ENCODE measurements at regions of chr1 and their contacts with region 1.

Region 1: GRCh38 chr1:155967341-155968050 is 10.9 kb downstream of the ARHGEF2 start:
- DNase-seq: peak in 1 of 2 donors; percentile 49
- ATAC-seq: peak; percentile 42 to 43
- H3K4me3 ChIP-seq: peak overlapping the region in 3 of 4 donors; percentile 11 to 32 (median 24)
- H3K27ac ChIP-seq: peak overlapping the region; percentile 82 to 95 (median 88)
- H3K4me1 ChIP-seq: peaks cover 58 to 66% of the 10 kb centered on the region in 2 donors
- H3K27me3 ChIP-seq: no peaks in the 10 kb centered on the region
- CTCF ChIP-seq: no peak
- POLR2A ChIP-seq: no peak

Region 2: DNA sequence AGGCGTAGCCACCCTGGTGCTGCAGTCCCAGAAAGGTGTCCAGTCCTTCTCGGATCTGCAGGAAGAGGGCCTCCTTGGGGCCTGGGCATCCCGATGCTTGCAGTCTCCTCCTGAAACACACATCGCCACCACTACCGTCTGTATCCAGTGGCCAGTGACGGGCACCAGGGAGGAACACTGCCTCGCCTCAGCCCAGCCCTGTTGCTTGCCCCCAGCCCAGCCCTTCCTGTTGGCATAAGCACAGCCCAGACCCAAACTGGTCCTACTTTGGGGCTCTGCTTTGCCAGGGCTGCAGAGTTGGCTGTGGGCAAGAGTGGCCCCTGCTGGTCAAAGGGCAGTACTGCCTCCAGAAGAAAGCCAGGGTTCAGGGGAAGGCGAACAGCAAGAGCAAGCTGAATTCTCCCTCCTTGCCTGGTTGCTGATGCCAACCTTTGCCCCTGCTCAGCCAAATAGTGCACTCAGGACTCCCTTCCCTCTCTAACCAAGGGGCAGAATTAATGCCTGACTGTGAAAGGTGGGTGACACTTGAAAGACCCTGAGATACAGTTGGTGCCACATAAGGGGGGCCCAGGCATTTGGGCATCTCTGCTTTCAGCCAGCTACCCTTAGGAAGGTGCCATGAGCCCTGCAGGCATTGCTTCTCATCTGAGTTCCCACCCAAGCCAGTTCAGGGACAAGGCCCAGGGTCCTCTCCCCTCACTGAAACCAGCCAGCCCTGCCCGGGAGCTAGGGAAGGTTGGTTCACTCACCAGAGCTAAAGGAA is 21.9 kb after region 1 on chr1:
- in situ Hi-C with region 1: no loop called
- intact Hi-C with region 1: loop called (anchors 2 kb)
- DNase-seq: peak; percentile 42 to 67
- ATAC-seq: peak; percentile 89 to 95
- H3K4me3 ChIP-seq: peak overlapping the region; percentile 26 to 44 (median 40)
- H3K27ac ChIP-seq: peak overlapping the region in 2 of 4 donors; percentile 22 to 35
- H3K4me1 ChIP-seq: peaks cover 3 to 7% of the 10 kb centered on the region in 2 donors
- H3K27me3 ChIP-seq: no peaks in the 10 kb centered on the region
- CTCF ChIP-seq: peak; percentile 98 to 99 (median 99)
- POLR2A ChIP-seq: no peak